Sigmoid colon (tissue), 7 donors: ENCODE measurements at regions of chr21 and their contacts with region 1.

Region 1: GRCh38 chr21:29298348-29299045 is at the start of gene BACH1:
- DNase-seq: peak; percentile 95
- H3K4me3 ChIP-seq: peak within 1 kb of the TSS; percentile 59 to 96 (median 84)
- H3K27ac ChIP-seq: peak within 1 kb of the TSS; percentile 87 to 97 (median 92)
- H3K4me1 ChIP-seq: peaks cover 0 to 47% (median 37%) of the 10 kb centered on the region in 4 donors
- H3K27me3 ChIP-seq: no peaks in the 10 kb centered on the region
- CTCF ChIP-seq: peak in 1 of 4 experiments; percentile 34
- EP300 ChIP-seq: no peak
- POLR2A ChIP-seq: peak; percentile 50 to 58
- total RNA-seq, gene BACH1: 47.1 to 89.6 (median 85.0) TPM

Region 2: DNA sequence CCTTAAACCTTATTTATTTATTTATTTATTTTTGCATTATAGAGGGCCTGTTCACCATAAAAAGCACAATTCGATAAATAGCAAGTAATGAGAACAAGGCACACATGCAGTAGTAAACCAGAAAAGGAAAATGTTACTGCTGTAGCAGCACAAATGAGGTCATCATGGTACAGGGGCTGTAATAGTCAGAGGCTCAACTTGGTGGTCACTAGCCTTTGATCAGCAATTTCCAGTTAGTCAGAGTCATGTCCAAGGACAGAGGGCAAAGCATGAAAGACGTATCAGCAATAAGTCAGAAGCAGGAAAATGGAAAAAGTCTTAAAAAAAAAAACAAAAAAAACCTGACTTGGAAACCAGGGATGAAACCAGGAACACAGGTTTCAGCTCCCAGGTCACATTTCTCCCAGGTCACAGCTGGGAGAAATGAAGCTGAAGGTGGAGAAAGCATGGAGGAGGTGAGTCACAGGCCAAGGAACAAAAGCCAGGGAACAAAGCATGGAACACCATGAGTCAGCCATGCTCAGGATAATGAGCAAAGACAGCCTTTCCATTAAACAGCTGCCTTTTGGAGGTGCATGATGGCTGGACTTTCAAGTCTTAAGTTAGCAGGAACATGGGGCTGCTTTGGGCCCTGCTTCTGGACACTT is 862.1 kb before region 1 on chr21:
- intact Hi-C with region 1: no loop called
- DNase-seq: no peak
- H3K4me3 ChIP-seq: no peak overlapping the region
- H3K27ac ChIP-seq: no peak overlapping the region
- H3K4me1 ChIP-seq: no peaks in the 10 kb centered on the region
- H3K27me3 ChIP-seq: no peaks in the 10 kb centered on the region
- CTCF ChIP-seq: no peak
- EP300 ChIP-seq: no peak
- POLR2A ChIP-seq: no peak

Region 3: GRCh38 chr21:29073222-29074006 is 225.1 kb before region 1 on chr21 and contains the start of gene CCT8:
- intact Hi-C with region 1: loop called (anchors 5 kb)
- DNase-seq: peak; percentile 99
- H3K4me3 ChIP-seq: peak within 1 kb of the TSS; percentile 90 to 99 (median 92)
- H3K27ac ChIP-seq: peak within 1 kb of the TSS; percentile 92 to 95 (median 93)
- H3K4me1 ChIP-seq: peaks cover 0 to 34% (median 27%) of the 10 kb centered on the region in 4 donors
- H3K27me3 ChIP-seq: no peaks in the 10 kb centered on the region
- CTCF ChIP-seq: no peak
- EP300 ChIP-seq: peak in 1 of 4 donors; percentile 66
- POLR2A ChIP-seq: peak; percentile 77 to 80
- total RNA-seq, gene CCT8: 67.3 to 99.1 (median 85.9) TPM

Region 4: DNA sequence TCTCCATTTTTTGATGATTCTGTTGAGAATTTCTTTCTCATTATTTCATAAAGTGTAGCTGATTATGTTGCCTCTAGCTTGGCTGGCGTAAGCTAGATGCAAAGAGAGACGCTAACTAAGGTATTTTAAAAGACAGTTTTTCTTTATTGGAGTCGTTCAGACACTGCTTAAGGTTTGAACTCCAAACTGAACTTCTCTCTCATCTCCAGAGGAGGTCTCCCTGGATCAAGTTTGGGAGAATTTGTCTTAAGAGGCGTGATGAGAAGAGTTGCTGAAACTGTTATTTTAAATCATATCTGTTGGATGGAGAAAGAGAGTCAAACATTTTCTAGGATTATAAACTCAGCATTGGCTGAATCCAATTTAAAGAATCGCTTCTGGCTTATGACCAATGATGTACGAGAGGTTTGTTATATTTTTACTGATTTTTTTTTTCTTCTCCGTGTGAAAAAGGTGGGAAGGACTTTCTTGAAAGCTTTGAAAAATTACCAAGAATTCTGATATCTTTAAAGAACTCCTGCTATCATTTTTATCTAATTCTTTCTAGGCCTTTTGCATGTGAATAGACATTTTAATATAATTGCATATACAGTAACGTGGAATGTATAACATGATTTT is 134.1 kb before region 1 on chr21:
- intact Hi-C with region 1: loop called (anchors 1 kb)
- DNase-seq: no peak
- H3K4me3 ChIP-seq: no peak overlapping the region
- H3K27ac ChIP-seq: peak overlapping the region in 1 of 4 donors; percentile 17
- H3K4me1 ChIP-seq: peaks cover 0 to 22% (median 11%) of the 10 kb centered on the region in 4 donors
- H3K27me3 ChIP-seq: no peaks in the 10 kb centered on the region
- CTCF ChIP-seq: peak; percentile 31 to 75 (median 64)
- EP300 ChIP-seq: no peak
- POLR2A ChIP-seq: no peak

Region 5: DNA sequence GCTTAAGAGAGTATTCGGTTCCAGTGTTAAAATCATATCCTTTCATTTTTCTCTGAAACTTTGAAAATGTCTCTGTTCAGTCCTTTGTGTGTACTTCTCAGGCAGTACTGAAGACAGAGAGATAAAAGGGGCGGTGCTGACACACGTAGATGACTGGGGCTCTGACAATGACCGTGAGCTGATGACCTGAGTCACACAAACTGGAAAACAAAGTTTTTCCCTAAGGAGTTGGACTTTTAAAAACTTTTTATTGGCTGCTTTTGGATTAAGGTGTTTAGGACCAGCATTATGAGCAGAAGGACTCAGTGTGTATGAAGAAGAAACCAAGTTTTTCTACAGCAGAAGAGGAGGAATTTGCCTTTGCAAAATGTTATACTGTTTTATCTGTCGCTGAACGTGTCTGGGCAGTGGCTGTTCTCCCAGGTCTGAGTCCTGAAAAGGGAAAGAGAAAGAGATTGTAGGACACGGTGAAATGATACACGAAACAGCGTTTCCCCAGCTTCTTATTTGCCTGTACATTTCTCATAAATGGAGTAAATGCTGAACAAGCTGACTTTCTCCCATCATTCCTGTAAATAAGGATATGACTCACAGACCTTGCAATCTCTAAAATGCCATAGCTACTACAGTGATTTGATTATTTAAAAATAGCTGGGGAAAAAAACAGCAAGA is 116.6 kb before region 1 on chr21:
- intact Hi-C with region 1: loop called (anchors 5 kb)
- DNase-seq: no peak
- H3K4me3 ChIP-seq: peak overlapping the region in 3 of 4 donors; percentile 26 to 40 (median 31)
- H3K27ac ChIP-seq: peak overlapping the region; percentile 68 to 80 (median 74)
- H3K4me1 ChIP-seq: peaks cover 0 to 24% (median 18%) of the 10 kb centered on the region in 4 donors
- H3K27me3 ChIP-seq: no peaks in the 10 kb centered on the region
- CTCF ChIP-seq: no peak
- EP300 ChIP-seq: peak in 1 of 4 donors; percentile 56
- POLR2A ChIP-seq: no peak

Region 6: GRCh38 chr21:29232601-29233546 is 65.6 kb before region 1 on chr21:
- intact Hi-C with region 1: loop called (anchors 2 kb)
- DNase-seq: no peak
- H3K4me3 ChIP-seq: no peak overlapping the region
- H3K27ac ChIP-seq: no peak overlapping the region
- H3K4me1 ChIP-seq: peaks cover 0 to 20% (median 16%) of the 10 kb centered on the region in 4 donors
- H3K27me3 ChIP-seq: no peaks in the 10 kb centered on the region
- CTCF ChIP-seq: no peak
- EP300 ChIP-seq: no peak
- POLR2A ChIP-seq: no peak

Region 7: DNA sequence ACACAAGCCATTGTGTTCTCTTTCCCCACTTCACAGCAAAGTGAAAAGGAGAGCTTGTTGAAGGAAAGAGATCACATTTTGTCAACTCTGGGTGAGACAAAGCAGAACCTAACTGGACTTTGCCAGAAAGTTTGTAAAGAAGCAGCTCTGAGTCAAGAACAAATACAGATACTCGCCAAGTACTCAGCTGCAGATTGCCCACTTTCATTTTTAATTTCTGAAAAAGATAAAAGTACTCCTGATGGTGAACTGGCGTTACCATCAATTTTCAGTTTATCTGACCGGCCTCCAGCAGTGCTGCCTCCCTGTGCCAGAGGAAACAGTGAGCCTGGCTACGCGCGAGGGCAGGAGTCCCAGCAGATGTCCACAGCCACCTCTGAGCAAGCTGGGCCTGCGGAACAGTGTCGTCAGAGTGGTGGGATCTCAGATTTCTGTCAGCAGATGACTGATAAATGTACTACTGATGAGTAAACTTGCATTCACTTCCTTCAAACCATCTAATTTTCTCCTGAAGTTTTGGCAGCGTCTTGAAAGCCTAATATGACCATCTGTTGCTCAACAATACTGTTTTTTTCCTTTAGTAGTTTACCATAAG is 44.0 kb after region 1 on chr21:
- intact Hi-C with region 1: loop called (anchors 2 kb)
- DNase-seq: peak; percentile 82
- H3K4me3 ChIP-seq: peak overlapping the region in 3 of 4 donors; percentile 6 to 26 (median 20)
- H3K27ac ChIP-seq: peak overlapping the region; percentile 67 to 80 (median 73)
- H3K4me1 ChIP-seq: peaks cover 0 to 89% (median 64%) of the 10 kb centered on the region in 4 donors
- H3K27me3 ChIP-seq: no peaks in the 10 kb centered on the region
- CTCF ChIP-seq: no peak
- EP300 ChIP-seq: peak in 1 of 4 donors; percentile 26
- POLR2A ChIP-seq: no peak

Region 8: GRCh38 chr21:29372063-29372802 is 73.7 kb after region 1 on chr21:
- intact Hi-C with region 1: loop called (anchors 2 kb)
- DNase-seq: peak; percentile 64
- H3K4me3 ChIP-seq: no peak overlapping the region
- H3K27ac ChIP-seq: no peak overlapping the region
- H3K4me1 ChIP-seq: no peaks in the 10 kb centered on the region
- H3K27me3 ChIP-seq: no peaks in the 10 kb centered on the region
- CTCF ChIP-seq: peak; percentile 65 to 82 (median 76)
- EP300 ChIP-seq: no peak
- POLR2A ChIP-seq: no peak

Region 9: DNA sequence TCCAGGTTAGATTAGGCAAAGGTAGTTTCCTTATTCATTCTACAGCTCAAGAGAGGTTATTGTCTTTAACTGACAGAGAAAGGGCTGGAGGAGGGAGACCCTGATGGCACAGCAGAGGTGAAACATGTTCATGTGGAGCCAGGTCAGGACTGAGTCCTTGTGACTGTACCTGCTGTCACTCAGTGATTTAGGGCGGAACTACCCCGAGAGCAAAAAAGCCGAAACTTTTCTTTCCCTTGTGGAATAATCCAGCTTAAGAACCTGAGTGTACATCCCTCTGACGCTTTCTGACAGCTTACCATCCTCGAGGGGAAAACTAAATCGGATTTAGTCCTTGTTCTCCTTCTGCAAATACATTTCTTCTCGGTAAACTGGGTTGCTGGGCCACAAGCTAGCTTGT is 273.5 kb after region 1 on chr21:
- intact Hi-C with region 1: no loop called
- DNase-seq: no peak
- H3K4me3 ChIP-seq: no peak overlapping the region
- H3K27ac ChIP-seq: no peak overlapping the region
- H3K4me1 ChIP-seq: no peaks in the 10 kb centered on the region
- H3K27me3 ChIP-seq: no peaks in the 10 kb centered on the region
- CTCF ChIP-seq: no peak
- EP300 ChIP-seq: no peak
- POLR2A ChIP-seq: no peak